ENCODE measurements at regions of chr11 and their contacts with region 1.

Region 1: GRCh38 chr11:68213555-68214174 is 569 bp upstream of the KMT5B start:
- DNase-seq: peak; percentile 94
- H3K4me3 ChIP-seq: peak overlapping the region; percentile 77 to 96
- H3K27ac ChIP-seq: peak overlapping the region; percentile 88 to 97
- H3K4me1 ChIP-seq: peaks cover 11 to 27% of the 10 kb centered on the region in 2 experiments; a peak in 3 of 4 replicates
- H3K27me3 ChIP-seq: no peaks in the 10 kb centered on the region; the same call in 1 of the 2 replicates
- CTCF ChIP-seq: no peak
- EP300 ChIP-seq: no peak
- RAD21 ChIP-seq: no peak

Region 2: GRCh38 chr11:68020575-68020974 is 193.1 kb before region 1 on chr11:
- CTCF ChIA-PET with region 1: interaction called, 11 read pairs
- POLR2A ChIA-PET with region 1: no interaction called
- DNase-seq: peak; percentile 82
- H3K4me3 ChIP-seq: no peak overlapping the region
- H3K27ac ChIP-seq: peak overlapping the region; percentile 19 to 26; a peak in 3 of 4 replicates
- H3K4me1 ChIP-seq: peaks cover 0 to 18% of the 10 kb centered on the region in 2 experiments; a peak in 1 of 4 replicates
- H3K27me3 ChIP-seq: no peaks in the 10 kb centered on the region
- CTCF ChIP-seq: peak; percentile 57
- EP300 ChIP-seq: no peak
- RAD21 ChIP-seq: peak; percentile 46

Region 3: DNA sequence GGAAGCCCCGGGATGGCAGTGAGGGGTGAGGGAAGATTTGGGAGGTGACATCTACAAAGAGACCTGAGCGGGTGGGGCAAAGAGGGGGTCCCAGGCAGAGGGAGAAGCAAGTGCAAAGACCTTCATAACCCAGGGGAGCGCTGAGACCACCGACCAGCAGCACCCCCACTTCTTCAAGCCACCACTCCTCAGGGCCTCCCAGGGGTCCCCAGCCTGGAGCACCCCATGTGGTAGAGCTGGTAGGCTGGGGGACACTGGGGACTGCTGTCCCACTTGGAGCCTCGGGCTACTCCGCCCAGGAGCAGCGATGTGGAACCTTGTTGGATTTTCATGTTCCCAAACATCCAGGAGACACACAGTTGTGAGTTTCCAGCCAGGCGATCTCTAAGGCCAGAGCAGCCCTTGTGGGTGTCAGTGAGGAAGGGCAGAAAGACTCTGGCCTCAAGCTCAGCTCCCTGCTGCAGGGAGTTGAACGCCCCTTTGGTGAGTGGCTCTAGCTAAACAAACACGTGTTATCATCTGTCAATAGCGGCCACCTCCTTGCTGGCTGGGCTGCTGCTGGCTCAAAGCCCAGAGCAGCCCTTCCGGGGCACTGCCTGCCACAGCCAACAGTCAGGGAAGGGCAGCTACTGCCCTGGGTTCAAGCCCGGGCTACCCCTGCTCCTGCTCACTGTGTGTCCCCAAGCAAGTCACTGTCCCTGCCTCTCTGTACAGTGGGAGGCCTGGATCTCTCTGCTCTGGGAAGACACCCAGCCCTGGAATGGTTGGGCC is 66.8 kb before region 1 on chr11:
- CTCF ChIA-PET with region 1: interaction called, 12 read pairs
- POLR2A ChIA-PET with region 1: no interaction called
- DNase-seq: peak; percentile 82
- H3K4me3 ChIP-seq: no peak overlapping the region
- H3K27ac ChIP-seq: no peak overlapping the region; a peak in 1 of 4 replicates
- H3K4me1 ChIP-seq: peaks cover 0 to 20% of the 10 kb centered on the region in 2 experiments; a peak in 1 of 4 replicates
- H3K27me3 ChIP-seq: no peaks in the 10 kb centered on the region
- CTCF ChIP-seq: no peak
- EP300 ChIP-seq: no peak
- RAD21 ChIP-seq: no peak; the same call in 1 of the 2 replicates

Region 4: DNA sequence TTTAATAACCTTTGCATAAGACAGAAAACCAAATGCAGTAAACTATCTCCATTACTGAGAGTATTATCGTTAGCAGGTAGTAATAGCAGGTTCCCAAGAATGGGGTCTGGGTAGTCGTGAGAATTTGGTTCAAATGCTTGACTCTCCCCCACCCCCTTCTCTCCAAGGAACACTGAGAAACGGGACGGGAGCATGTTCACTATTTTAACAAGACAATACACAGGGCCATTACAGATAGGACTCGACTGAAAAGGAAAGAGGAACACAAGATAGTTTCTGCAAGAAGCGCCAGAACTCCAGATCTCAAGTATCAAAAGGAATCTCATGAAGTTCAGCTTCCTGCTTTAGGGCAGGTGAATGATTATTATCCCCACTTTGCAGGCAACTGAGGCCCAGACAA is 27.6 kb before region 1 on chr11:
- CTCF ChIA-PET with region 1: interaction called, 17 read pairs
- POLR2A ChIA-PET with region 1: no interaction called
- DNase-seq: no peak
- H3K4me3 ChIP-seq: no peak overlapping the region
- H3K27ac ChIP-seq: no peak overlapping the region
- H3K4me1 ChIP-seq: no peaks in the 10 kb centered on the region
- H3K27me3 ChIP-seq: no peaks in the 10 kb centered on the region
- CTCF ChIP-seq: no peak
- EP300 ChIP-seq: no peak
- RAD21 ChIP-seq: no peak

Region 5: DNA sequence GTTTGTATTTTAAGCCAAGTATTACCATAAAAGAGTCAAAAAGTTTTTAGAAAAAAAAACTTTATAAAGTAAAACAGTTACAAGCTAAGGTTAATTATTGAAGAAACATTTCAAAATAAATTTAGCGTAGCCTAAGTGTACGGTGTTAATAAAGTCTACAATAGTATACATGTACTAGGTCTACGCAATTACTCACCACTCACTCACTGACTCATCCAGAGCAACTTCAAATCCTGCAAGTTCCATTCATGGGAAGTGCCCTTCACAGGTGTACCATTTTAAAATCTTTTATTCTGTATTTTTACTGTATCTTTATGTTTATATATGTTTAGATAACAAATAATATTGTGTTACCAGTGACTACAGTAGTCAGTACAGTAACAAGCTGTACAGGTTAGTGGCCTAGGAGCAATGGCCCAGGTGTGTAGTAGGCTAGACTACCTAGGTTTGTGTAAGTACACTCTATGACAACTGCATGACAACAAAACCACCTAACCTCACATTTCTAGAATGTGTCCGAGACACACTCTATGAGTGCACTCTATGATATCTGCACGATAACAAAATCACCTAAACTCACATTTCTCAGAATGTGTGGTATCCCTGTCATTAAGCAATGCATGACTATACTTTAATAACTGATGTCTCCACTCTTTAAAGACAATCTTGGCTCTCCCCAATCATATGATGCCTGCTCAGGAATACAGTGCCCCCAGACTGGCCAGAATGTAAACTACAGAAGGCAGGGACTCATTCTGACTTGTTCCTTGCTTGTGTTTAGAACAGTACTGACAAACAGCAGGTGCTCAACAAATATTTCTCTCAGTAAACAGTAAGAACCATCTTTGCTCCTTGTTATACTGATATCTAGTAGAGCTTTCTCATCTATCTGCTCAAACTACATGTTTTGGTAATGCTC is 21.7 kb before region 1 on chr11:
- CTCF ChIA-PET with region 1: interaction called, 17 read pairs
- POLR2A ChIA-PET with region 1: interaction called, 3 read pairs
- DNase-seq: no peak
- H3K4me3 ChIP-seq: no peak overlapping the region
- H3K27ac ChIP-seq: no peak overlapping the region
- H3K4me1 ChIP-seq: no peaks in the 10 kb centered on the region; a peak in 1 of 4 replicates
- H3K27me3 ChIP-seq: no peaks in the 10 kb centered on the region
- CTCF ChIP-seq: no peak
- EP300 ChIP-seq: no peak
- RAD21 ChIP-seq: no peak

Region 6: DNA sequence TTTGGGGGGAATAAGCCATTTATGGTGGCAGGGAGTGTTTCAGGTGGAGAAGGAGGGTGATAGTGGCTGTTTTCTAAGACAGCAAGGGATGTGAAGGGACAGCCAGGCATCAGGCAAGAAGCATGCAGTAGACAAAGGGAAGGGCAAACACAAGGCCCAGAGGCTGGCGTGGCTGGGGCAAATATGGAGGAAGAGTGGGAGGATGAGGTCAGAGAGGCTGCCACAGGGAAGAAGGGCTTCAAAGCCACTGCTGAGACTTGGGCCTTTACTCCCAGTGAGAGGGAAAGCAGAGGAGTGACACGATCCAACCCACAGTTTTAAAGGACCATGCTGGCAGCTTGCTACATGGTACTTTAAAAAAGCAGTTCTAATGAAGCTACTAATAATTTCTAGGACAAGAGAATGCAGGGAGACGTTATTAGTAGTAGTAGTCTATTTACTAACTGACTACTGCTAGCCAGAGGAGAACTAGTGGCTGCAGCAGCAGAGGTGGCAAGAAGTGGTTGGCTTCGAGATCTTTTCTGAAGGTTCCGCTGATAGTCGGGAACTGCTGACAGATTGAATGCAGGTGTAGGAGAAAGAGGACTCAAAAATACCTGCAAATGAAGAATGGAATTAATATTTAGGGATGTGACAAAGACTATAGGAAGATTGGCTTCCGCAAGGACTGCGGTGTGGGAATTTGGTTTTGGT is 14.2 kb before region 1 on chr11:
- CTCF ChIA-PET with region 1: interaction called, 15 read pairs
- POLR2A ChIA-PET with region 1: interaction called, 3 read pairs
- DNase-seq: no peak
- H3K4me3 ChIP-seq: no peak overlapping the region
- H3K27ac ChIP-seq: no peak overlapping the region
- H3K4me1 ChIP-seq: peaks cover 0 to 9% of the 10 kb centered on the region in 2 experiments; a peak in 2 of 4 replicates
- H3K27me3 ChIP-seq: no peaks in the 10 kb centered on the region
- CTCF ChIP-seq: no peak
- EP300 ChIP-seq: no peak
- RAD21 ChIP-seq: no peak

Region 7: GRCh38 chr11:68321293-68322041 is 107.8 kb after region 1 on chr11:
- CTCF ChIA-PET with region 1: no interaction called
- POLR2A ChIA-PET with region 1: no interaction called
- DNase-seq: no peak
- H3K4me3 ChIP-seq: no peak overlapping the region
- H3K27ac ChIP-seq: no peak overlapping the region
- H3K4me1 ChIP-seq: peaks cover 0 to 42% of the 10 kb centered on the region in 2 experiments; a peak in 1 of 4 replicates
- H3K27me3 ChIP-seq: no peaks in the 10 kb centered on the region
- CTCF ChIP-seq: no peak
- EP300 ChIP-seq: no peak
- RAD21 ChIP-seq: no peak

Region 8: GRCh38 chr11:68354148-68354872 is 140.6 kb after region 1 on chr11:
- CTCF ChIA-PET with region 1: no interaction called
- POLR2A ChIA-PET with region 1: no interaction called
- DNase-seq: no peak
- H3K4me3 ChIP-seq: 0 out of 4 replicates have a peak overlapping the region, but pooled peaks of 1 of the 2 experiments have one; percentile 5
- H3K27ac ChIP-seq: peak overlapping the region; percentile 80
- H3K4me1 ChIP-seq: peaks cover 6 to 15% of the 10 kb centered on the region in 2 experiments; a peak in 3 of 4 replicates
- H3K27me3 ChIP-seq: no peaks in the 10 kb centered on the region
- CTCF ChIP-seq: no peak
- EP300 ChIP-seq: peak in 1 of 2 experiments; percentile 38; a peak in 2 of 4 replicates
- RAD21 ChIP-seq: no peak